Dendritic cell treated with granulocyte-macrophage colony-stimulating factor and Interleukin-4, amounts not matched to agents 40 ng/mL and 50 ng/mL, for 4 days (primary cell): ENCODE measurements at regions of chr3 and their contacts with region 1.

Region 1: DNA sequence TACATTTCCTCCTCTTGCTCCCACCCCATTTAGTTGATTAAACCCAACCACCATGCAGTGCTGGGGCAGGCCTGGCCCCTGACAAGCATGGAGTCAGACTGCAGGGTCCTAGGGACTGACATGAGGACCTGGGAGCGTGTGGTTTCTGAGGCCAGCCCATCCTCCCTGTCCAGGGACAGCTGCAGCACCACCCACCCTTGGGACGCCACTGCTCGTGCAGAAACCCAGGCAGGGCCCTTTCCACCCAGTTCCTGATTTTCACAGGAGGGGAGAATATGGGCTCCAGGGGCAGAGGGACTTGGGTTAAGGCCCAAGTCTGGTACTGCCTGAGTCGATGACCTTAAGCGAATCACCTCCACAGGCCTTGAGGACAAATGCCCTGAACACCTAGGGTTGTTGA is 23.7 kb downstream of the PLXND1 start:
- H3K4me3 Mint-ChIP-seq: no peak overlapping the region
- H3K27ac Mint-ChIP-seq: peak overlapping the region; percentile 69
- H3K4me1 Mint-ChIP-seq: peaks cover 64% of the 10 kb centered on the region
- H3K27me3 Mint-ChIP-seq: no peaks in the 10 kb centered on the region

Region 2: GRCh38 chr3:129469026-129469425 is 113.8 kb before region 1 on chr3:
- intact Hi-C with region 1: no loop called
- H3K4me3 Mint-ChIP-seq: no peak overlapping the region
- H3K27ac Mint-ChIP-seq: no peak overlapping the region
- H3K4me1 Mint-ChIP-seq: peaks cover 6% of the 10 kb centered on the region
- H3K27me3 Mint-ChIP-seq: no peaks in the 10 kb centered on the region

Region 3: DNA sequence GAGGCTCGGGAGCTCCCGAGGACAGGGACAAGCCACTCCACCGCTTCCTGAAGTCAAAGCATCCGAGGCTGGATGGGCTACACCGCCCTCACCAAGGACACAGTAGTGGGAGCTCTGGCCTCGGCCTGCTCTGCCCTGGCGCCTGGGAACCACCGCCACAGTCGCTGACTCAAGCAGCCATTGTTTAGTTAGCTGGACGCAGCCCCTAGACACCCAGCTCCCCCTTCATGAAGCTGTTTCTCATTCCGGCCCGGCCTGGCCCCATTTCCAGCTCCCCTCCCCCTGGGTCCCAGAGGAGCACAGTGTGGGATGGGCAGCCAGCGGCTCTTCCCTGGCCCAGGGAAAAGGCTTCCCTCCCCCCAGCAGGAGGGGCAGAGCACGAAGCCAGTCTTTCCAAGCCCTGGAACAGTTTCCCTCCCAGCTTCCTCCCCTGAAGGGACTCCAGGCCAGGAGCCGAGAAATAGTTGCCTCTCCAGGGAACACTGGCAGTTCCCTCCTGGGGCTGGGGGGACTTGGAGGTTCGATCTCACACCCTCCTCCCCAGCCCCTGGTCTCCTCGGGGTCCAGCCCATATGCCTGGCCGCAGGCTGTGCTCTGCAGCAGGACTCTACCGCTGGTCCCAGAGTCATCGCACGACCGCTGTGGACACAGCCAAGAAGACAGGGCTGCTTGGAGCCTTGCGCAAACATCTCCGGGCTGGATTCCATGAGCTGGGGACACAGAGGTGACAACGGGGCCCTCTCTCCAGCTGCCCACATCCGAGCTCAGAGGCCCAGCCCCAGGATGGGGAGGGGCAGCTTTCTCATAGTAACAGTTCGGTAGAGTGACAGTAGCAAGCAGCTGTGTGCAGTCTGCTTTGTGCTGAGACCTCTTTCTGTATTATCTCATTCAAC is 13.6 kb after region 1 on chr3:
- intact Hi-C with region 1: loop called (anchors 2 kb)
- H3K4me3 Mint-ChIP-seq: peak overlapping the region; percentile 66
- H3K27ac Mint-ChIP-seq: peak overlapping the region; percentile 99
- H3K4me1 Mint-ChIP-seq: peaks cover 95% of the 10 kb centered on the region
- H3K27me3 Mint-ChIP-seq: no peaks in the 10 kb centered on the region